ENCODE measurements at regions of chr2 and their contacts with region 1.

Region 1: GRCh38 chr2:113390124-113390849 is 47.2 kb upstream of the ZNG1B start:
- DNase-seq: peak; percentile 28
- H3K4me3 ChIP-seq: no peak overlapping the region
- CTCF ChIP-seq: peak; percentile 80

Region 2: GRCh38 chr2:113124181-113124961 is 265.9 kb before region 1 on chr2:
- CTCF ChIA-PET with region 1: interaction called, 12 read pairs
- POLR2A ChIA-PET with region 1: no interaction called
- DNase-seq: no peak
- H3K4me3 ChIP-seq: no peak overlapping the region
- CTCF ChIP-seq: no peak

Region 3: GRCh38 chr2:113192438-113193100 is 197.7 kb before region 1 on chr2:
- CTCF ChIA-PET with region 1: interaction called, 21 read pairs
- POLR2A ChIA-PET with region 1: no interaction called
- DNase-seq: no peak
- H3K4me3 ChIP-seq: no peak overlapping the region
- CTCF ChIP-seq: no peak

Region 4: GRCh38 chr2:113219889-113220641 is 170.2 kb before region 1 on chr2:
- CTCF ChIA-PET with region 1: interaction called, 12 read pairs
- POLR2A ChIA-PET with region 1: no interaction called
- DNase-seq: no peak
- H3K4me3 ChIP-seq: no peak overlapping the region
- CTCF ChIP-seq: no peak

Region 5: DNA sequence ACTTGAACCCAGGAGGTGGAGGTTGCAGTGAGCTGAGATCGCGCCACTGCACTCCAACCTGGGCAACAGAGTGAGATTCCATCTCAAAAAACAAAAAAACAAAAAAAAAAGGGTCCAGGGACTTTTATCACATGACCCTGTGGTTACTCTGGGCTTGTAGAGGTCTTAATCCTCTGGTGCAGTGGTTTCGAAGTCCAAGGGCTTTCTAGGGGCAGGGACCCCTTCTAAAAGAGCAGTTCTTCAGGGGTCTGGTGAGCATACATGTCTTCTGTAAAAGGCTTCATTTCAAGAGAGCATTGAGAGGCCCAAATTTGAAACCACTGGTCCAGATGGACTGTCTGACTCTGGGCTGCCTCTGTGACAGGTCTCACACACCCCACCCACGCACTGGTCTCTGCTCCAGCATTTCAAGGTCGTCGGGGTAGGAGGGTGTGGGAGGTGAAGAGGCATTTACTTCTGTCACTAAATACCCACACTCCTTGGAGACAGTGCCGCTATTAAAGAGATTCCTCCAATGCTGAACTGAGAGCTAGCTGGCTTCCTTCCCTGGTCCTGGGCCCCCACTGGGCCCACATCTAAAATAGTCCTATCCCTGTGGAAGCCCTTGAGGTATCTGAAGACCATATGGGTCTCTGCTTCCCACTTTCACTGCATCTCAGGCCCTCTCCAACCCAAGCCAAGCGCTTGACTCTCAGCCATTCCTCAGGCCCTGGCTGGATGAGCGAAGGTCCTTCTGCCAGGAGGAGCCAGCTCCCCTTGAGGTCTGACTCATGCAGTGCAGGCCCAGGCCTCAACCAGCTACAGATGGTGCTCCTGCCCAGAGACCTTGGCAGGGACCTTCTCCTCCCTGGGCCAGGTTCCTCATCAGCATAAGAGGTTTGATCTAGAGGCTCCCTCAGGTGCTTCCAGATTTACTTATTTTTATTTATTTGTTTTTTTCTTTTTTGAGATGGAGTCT is 156.4 kb before region 1 on chr2:
- CTCF ChIA-PET with region 1: interaction called, 12 read pairs
- POLR2A ChIA-PET with region 1: no interaction called
- DNase-seq: no peak
- H3K4me3 ChIP-seq: no peak overlapping the region
- CTCF ChIP-seq: peak; percentile 37

Region 6: GRCh38 chr2:113342650-113343049 is 47.6 kb before region 1 on chr2:
- CTCF ChIA-PET with region 1: no interaction called
- POLR2A ChIA-PET with region 1: no interaction called
- DNase-seq: no peak
- H3K4me3 ChIP-seq: no peak overlapping the region
- CTCF ChIP-seq: no peak

Region 7: DNA sequence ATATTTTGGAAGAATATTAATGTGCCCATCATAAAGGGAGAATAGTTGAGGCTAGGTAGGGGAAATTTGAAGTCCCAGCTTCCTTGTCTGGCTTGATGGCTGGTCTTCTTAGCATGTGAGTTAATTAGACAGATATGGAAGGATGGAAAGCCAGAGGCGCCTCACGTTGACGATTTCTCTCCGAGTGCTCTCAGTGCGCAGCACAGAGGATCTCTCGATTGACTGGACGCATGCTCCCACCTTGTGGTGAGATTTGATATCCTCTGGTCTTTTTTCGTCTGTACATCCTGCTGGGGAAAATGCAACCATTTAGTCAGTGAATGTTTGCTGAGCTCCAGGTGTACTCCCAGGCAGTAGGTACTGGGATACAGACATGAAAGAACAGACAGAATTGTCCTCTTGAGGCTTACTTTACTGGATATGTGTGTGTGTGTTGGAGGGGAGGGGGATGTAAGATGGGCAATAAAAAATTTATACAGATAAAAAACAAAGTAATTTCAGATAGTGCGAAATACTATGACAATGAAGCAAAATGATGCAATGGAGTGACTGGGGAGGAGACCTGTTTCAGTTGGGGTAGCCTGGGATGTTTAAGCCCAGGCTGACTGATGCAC is 19.7 kb before region 1 on chr2:
- CTCF ChIA-PET with region 1: interaction called, 23 read pairs
- POLR2A ChIA-PET with region 1: no interaction called
- DNase-seq: peak; percentile 34
- H3K4me3 ChIP-seq: no peak overlapping the region
- CTCF ChIP-seq: peak; percentile 60